ENCODE measurements at regions of chr17 and their contacts with region 1.

Region 1: DNA sequence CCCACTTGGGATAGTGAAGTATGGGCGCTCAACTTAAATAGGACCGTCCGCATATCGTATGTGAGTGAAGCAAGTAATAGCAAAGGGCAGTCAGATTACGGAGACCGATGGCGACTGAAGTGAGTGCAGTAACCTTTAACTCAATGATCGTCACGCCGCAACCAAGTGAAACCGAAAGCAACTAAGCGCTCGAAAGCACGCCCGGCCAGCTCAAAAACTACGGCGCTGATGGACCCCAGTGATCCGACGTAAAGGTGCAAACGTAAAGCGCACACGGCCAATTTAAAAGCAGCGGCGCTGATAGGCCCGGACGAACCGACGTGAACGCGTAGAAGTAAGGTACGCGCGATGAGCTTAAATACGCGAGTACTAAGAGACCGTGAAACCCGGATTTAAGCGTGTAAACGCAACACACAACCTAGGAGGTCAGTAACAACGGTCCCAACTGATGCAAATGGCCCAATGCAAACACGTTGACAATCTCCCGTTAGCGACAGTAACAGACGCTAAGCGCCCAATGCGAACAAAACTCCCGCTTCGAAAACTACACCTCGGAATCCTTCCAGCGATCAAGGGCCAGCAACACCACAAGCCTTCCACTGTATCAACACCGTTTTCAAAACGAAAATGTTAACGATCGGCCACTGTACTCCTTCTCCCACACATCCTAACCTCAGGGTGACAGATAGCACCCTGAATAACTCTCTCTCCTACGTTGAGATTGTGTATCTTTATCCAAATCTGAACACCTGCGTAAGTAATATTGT is 37.9 kb upstream of the ARL4D start:
- DNase-seq: peak; percentile 90 to 93 (median 90)
- ATAC-seq: peak; percentile 87 to 93 (median 90)
- H3K4me3 ChIP-seq: peak overlapping the region; percentile 24 to 73 (median 59)
- H3K27ac ChIP-seq: peak overlapping the region; percentile 90 to 99 (median 96)
- H3K4me1 ChIP-seq: peaks cover 0 to 18% (median 10%) of the 10 kb centered on the region in 12 donors
- H3K27me3 ChIP-seq: no peaks in the 10 kb centered on the region
- CTCF ChIP-seq: no peak
- POLR2A ChIP-seq: peak; percentile 10 to 97

Region 2: DNA sequence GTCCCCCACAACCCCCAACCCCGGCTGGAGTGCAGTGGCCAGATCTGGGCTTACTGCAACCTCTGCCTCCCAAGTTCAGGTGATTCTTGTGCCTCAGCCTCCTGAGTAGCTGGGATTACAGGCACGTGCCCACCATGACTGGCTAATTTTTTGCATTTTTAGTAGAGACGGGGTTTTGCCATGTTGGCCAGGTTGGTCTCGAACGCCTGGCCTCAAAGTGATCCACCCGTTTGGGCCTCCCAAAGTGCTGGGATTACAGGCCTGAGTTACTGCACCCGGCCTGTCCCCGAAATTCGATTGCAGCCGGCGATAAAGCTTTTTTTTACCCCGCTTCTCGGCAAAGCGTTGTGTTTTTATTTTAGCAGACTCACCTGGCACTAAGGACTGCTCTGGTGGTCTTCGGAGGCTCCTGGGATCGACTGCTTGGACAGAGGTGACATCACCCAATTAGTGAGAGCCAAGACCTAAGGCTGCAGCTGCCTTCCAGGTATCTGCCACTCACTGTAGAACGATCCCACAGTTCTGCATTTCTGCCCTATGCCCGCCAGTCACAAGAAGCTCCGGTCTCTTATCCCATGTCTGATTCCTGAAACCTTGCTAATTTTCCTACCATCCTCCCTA is 44.3 kb before region 1 on chr17:
- intact Hi-C with region 1: loop called in 1 of 10 experiments (anchors 10 kb)
- DNase-seq: no peak
- ATAC-seq: no peak
- H3K4me3 ChIP-seq: no peak overlapping the region
- H3K27ac ChIP-seq: peak overlapping the region in 1 of 12 donors; percentile 15
- H3K4me1 ChIP-seq: peaks cover 0 to 4% (median 0%) of the 10 kb centered on the region in 12 donors
- H3K27me3 ChIP-seq: no peaks in the 10 kb centered on the region
- CTCF ChIP-seq: no peak
- POLR2A ChIP-seq: no peak

Region 3: DNA sequence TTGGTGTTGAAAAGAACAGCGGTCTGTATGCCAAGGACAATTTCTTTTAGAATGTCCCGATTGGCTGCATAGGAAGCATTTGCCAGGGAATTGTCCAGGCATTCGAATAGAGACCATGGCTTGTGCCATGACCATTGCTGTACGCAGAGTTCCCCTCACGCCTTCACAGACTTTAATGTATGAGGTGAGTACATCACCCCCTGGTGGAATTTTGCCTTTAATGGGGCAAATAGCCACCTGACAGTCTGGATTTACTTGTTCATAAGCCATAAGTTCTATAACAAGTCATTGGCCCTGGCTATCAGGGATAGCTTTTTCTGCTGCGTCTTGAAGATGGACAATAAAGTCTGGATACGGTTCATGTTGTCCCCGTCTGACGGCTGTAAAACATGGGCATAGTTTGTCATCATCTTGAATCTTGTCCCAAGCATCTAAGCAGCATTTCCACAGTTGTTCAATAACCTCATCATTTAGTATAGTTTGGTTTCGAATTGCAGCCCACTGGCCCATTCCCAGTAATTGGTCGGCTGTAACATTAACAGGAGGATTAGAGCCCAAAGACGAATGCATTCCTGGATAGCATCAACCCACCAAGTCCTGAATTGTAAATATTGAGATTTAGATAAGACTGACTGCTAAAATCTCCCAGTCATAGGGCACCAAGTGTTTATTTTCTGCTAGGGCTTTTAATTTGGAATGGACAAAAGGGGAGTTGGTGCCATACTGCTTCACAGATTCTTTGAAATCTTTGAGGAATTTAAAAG is 29.9 kb before region 1 on chr17:
- intact Hi-C with region 1: no loop called
- DNase-seq: no peak
- ATAC-seq: no peak
- H3K4me3 ChIP-seq: no peak overlapping the region
- H3K27ac ChIP-seq: no peak overlapping the region
- H3K4me1 ChIP-seq: peaks cover 0 to 15% (median 5%) of the 10 kb centered on the region in 12 donors
- H3K27me3 ChIP-seq: peaks cover 0 to 9% (median 0%) of the 10 kb centered on the region in 9 donors
- CTCF ChIP-seq: no peak
- POLR2A ChIP-seq: no peak

Region 4: GRCh38 chr17:43442711-43443110 is 81.8 kb after region 1 on chr17:
- intact Hi-C with region 1: no loop called
- DNase-seq: no peak
- ATAC-seq: peak in 2 of 4 donors; percentile 49 to 69
- H3K4me3 ChIP-seq: no peak overlapping the region
- H3K27ac ChIP-seq: no peak overlapping the region
- H3K4me1 ChIP-seq: no peaks in the 10 kb centered on the region
- H3K27me3 ChIP-seq: no peaks in the 10 kb centered on the region
- CTCF ChIP-seq: no peak
- POLR2A ChIP-seq: no peak

Measured in heart left ventricle (tissue), 16 donors.